ENCODE measurements at regions of chr14 and their contacts with region 1.

Region 1: GRCh38 chr14:75249251-75249957 is 29.2 kb upstream of the FOS start:
- DNase-seq: peak; percentile 90
- H3K4me3 Mint-ChIP-seq: no peak overlapping the region
- H3K27ac Mint-ChIP-seq: peak overlapping the region; percentile 66
- H3K4me1 Mint-ChIP-seq: peaks cover 54% of the 10 kb centered on the region
- H3K27me3 Mint-ChIP-seq: no peaks in the 10 kb centered on the region

Region 2: GRCh38 chr14:74841230-74842207 is 407.9 kb before region 1 on chr14:
- CTCF ChIA-PET with region 1: no interaction called
- intact Hi-C with region 1: loop called (anchors 2 kb)
- DNase-seq: peak; percentile 46
- H3K4me3 Mint-ChIP-seq: no peak overlapping the region
- H3K27ac Mint-ChIP-seq: peak overlapping the region; percentile 54
- H3K4me1 Mint-ChIP-seq: peaks cover 54% of the 10 kb centered on the region
- H3K27me3 Mint-ChIP-seq: no peaks in the 10 kb centered on the region

Region 3: DNA sequence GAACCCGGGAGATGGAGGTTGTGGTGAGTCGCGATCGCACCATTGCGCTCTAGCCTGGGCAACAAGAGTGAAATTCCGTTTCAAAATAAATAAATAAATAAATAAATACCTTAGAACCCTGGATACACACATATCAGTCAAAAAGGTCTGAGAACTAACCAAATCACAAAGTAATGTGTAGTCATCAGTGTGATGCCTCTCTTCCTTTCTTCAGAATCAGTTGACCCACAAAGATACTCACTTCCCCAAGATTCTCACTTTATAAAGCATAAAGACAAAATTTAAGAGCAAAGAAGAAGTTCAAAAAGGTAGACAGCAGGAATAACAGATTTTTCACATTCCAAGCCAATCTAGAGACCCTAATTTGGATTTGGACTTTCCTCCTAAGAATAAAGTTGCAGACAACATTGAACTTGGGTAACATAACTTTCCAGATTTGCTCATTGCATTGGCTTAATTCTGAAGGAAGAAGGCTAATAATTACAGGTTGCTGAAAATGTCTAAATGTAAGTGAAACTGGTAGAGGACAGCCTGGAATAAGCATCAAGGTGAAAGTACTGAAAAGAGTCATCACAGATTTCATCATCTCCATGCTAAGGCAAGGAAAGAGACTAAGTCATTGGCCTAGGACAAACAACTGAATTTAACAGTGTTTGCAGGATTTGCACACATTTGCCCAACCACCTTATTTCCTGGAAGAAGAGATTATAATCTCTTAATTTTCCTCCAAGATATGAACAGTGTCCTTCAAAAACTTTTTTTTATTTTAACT is 90.4 kb before region 1 on chr14:
- CTCF ChIA-PET with region 1: interaction called, 3 read pairs
- intact Hi-C with region 1: loop called (anchors 1 kb)
- DNase-seq: no peak
- H3K4me3 Mint-ChIP-seq: no peak overlapping the region
- H3K27ac Mint-ChIP-seq: peak overlapping the region; percentile 66
- H3K4me1 Mint-ChIP-seq: peaks cover 64% of the 10 kb centered on the region
- H3K27me3 Mint-ChIP-seq: no peaks in the 10 kb centered on the region

Region 4: GRCh38 chr14:75278422-75279161 is 29.2 kb after region 1 on chr14 and contains the start of gene FOS:
- CTCF ChIA-PET with region 1: no interaction called
- intact Hi-C with region 1: loop called (anchors 1 kb)
- DNase-seq: peak; percentile 92
- H3K4me3 Mint-ChIP-seq: peak within 1 kb of the TSS; percentile 93
- H3K27ac Mint-ChIP-seq: peak within 1 kb of the TSS; percentile 90
- H3K4me1 Mint-ChIP-seq: peaks cover 29% of the 10 kb centered on the region
- H3K27me3 Mint-ChIP-seq: peaks cover 26% of the 10 kb centered on the region
- total RNA-seq, gene FOS: 34.5 to 35.7 TPM

Region 5: DNA sequence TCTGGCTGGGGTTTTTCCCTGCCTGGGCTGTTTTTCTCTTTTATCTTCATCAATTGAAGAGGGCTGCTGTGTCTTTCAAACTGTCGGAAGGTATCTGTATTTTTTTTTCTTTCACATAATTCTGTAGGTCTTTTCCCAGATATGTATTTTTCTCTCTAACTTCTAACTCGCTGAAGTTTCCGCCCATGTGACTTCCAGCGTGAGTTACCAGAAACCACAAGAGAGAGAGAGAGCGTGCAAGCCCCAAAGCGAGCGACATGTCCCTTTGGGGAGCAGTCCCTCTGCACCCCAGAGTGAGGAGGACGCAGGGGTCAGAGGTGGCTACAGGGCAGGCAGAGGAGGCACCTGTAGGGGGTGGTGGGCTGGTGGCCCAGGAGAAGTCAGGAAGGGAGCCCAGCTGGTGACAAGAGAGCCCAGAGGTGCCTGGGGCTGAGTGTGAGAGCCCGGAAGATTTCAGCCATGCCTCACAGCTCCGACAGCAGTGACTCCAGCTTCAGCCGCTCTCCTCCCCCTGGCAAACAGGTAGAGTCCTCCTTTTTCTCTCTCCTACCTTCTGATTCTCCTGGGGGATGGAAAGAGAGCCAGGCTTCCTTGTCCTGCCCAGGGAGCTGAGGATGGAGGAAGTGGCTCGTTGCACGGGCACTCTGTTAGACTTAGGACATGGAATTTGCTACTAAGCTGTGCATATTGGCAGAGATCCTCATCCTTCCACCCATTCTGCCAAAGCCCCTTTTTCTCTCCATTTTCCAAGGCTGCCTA is 273.0 kb after region 1 on chr14 and contains the start of gene BATF:
- CTCF ChIA-PET with region 1: no interaction called
- intact Hi-C with region 1: loop called (anchors 5 kb)
- DNase-seq: peak; percentile 91
- H3K4me3 Mint-ChIP-seq: peak within 1 kb of the TSS; percentile 99
- H3K27ac Mint-ChIP-seq: peak within 1 kb of the TSS; percentile 100
- H3K4me1 Mint-ChIP-seq: peaks cover 61% of the 10 kb centered on the region
- H3K27me3 Mint-ChIP-seq: no peaks in the 10 kb centered on the region
- total RNA-seq, gene BATF: 178 to 179 TPM

Region 6: GRCh38 chr14:75566321-75566720 is 316.9 kb after region 1 on chr14:
- CTCF ChIA-PET with region 1: no interaction called
- intact Hi-C with region 1: loop called (anchors 5 kb)
- DNase-seq: peak; percentile 96
- H3K4me3 Mint-ChIP-seq: peak overlapping the region; percentile 63
- H3K27ac Mint-ChIP-seq: peak overlapping the region; percentile 85
- H3K4me1 Mint-ChIP-seq: peaks cover 77% of the 10 kb centered on the region
- H3K27me3 Mint-ChIP-seq: no peaks in the 10 kb centered on the region